ENCODE measurements at regions of chr7 and their contacts with region 1.

Region 1: DNA sequence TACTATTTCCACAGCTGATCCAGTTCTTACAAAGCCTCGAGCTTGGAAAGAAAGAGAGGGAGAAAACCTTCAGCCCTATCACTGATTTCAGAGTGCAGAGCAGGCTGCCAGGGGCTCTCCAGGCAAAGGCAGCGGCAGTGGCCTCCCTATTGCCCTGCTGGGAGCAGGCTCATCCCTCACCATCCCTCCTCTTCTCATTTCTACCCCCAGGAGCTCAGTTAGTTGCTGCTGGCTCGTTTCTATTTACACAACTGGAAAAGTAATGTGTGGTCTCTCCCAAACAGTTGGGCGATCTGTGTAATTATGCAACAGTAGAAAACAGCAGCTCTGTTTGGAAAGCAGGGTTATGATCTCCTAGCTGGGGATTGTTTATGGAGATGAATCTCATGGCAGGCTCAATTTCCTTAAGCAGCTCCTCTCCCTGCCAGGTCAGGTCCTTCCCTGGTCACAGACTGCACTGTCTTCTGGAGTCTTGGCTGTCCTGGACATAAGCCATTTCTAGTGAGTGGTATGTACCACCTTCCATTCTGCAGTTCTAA is 28.7 kb upstream of the TNS3 start:
- DNase-seq: peak; percentile 84
- H3K4me3 ChIP-seq: no peak overlapping the region
- H3K27me3 ChIP-seq: no peaks in the 10 kb centered on the region
- CTCF ChIP-seq: 0 out of 2 replicates have a peak, but pooled peaks have one; percentile 10

Region 2: DNA sequence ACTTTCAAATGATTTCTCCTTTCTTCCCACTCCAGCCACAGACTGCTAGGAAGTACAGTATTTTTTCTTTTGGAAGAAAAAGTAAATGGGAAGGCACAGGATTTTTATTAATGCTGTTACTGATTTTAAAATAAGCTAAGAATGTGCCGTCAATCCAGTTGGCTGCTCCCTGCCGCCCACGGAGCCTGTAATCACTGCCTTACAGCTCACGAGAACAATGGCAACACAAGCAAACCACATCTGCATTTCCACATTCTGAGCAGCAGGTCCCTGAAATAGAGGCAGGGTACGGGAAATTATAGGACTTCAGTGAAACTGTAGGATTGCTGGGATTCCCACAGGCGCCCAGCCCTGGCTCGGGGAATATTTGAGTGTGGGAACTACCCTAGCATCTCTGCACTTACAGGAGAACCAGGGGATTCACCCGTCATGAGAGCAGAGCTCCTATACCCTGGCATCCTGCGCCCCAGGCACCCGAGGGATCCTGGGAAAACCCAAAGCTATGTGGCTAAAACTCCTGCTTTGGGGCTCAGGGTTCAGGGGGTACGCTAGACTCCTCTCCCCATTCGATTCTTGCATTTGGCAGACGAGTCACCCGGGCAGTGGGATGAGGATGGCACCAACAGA is 44.2 kb after region 1 on chr7:
- CTCF ChIA-PET with region 1: no interaction called
- POLR2A ChIA-PET with region 1: interaction called, 11 read pairs
- DNase-seq: no peak
- H3K4me3 ChIP-seq: no peak overlapping the region
- H3K27me3 ChIP-seq: no peaks in the 10 kb centered on the region
- CTCF ChIP-seq: no peak

Measured in BJ (cell line).